Ovary (tissue), 10 donors: ENCODE measurements at regions of chr19 and their contacts with region 1.

Region 1: GRCh38 chr19:17135001-17135853 is 59.6 kb downstream of the MYO9B start:
- DNase-seq: peak; percentile 85 to 91 (median 86)
- H3K4me3 ChIP-seq: no peak overlapping the region
- H3K27ac ChIP-seq: peak overlapping the region; percentile 26 to 53
- H3K4me1 ChIP-seq: peaks cover 4% of the 10 kb centered on the region
- H3K27me3 ChIP-seq: no peaks in the 10 kb centered on the region
- CTCF ChIP-seq: peak in 1 of 3 donors; percentile 24
- EP300 ChIP-seq: no peak
- POLR2A ChIP-seq: no peak

Region 2: GRCh38 chr19:17075035-17075863 is 60.0 kb before region 1 on chr19 and contains the starts of genes HAUS8 and MYO9B:
- intact Hi-C with region 1: loop called in 1 of 4 experiments (anchors 10 kb)
- DNase-seq: peak; percentile 99 to 100 (median 99)
- H3K4me3 ChIP-seq: peak within 1 kb of the TSS; percentile 57
- H3K27ac ChIP-seq: peak within 1 kb of the TSS in 1 of 2 donors; percentile 19
- H3K4me1 ChIP-seq: peaks cover 9% of the 10 kb centered on the region
- H3K27me3 ChIP-seq: no peaks in the 10 kb centered on the region
- CTCF ChIP-seq: no peak
- EP300 ChIP-seq: no peak
- POLR2A ChIP-seq: peak; percentile 12
- total RNA-seq, gene HAUS8: 4.3 to 7.0 (median 5.5) TPM
- total RNA-seq, gene MYO9B: 17.9 to 56.3 (median 38.4) TPM